HEK293T (cell line): ENCODE measurements at regions of chr19 and their contacts with region 1.

Region 1: DNA sequence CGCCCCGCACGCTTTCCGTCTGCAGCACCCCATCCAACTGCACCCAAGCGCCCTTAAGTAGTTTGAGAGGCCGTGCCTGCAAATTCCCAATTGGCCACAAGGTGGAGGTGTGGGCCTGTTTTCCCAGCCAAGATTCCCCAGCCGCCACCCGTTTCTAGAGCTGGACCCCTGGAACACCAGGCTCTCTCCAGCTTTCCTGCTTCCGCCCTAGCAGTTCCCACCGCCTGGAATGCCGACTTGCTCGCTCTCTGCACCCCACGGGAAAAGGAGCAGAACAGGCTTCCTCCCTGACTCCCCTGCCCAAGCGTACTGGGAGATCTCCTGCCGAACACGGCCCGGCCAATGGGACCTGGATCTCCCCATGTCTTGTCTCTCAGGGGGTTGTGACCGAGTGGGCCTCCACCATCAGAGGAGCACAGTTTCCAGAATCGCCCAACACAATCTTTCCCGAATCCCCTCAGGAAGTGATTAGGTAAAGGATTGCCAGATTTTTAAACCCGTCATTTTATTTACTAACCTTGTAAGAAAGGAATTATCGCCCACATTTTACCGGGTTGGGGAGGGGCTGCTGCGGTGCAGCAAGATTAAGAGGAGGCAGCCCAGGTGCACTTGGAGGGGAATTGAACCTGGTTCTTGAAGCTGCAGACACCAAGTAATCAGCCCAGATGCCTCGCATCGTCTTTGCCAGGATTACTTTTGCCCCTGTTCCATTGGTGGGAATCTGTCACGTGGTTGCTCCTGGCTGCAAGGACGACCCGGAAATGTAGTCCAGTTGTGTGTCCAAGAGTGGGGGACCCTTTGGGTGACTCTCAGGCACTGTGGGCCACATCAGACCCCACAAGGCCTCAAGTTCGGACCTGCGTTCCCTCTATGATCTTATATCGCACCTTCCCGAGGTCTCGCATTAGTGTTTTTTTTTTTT is 3.5 kb upstream of the NAPSA start:
- DNase-seq: peak; percentile 88

Region 2: GRCh38 chr19:50341091-50341564 is 27.8 kb before region 1 on chr19:
- CTCF ChIA-PET with region 1: no interaction called
- POLR2A ChIA-PET with region 1: no interaction called
- DNase-seq: no peak

Region 3: GRCh38 chr19:50383852-50384684 is 15.2 kb after region 1 on chr19 and contains the start of gene POLD1:
- CTCF ChIA-PET with region 1: interaction called, 3 read pairs
- POLR2A ChIA-PET with region 1: interaction called, 11 read pairs
- DNase-seq: peak; percentile 99

Region 4: DNA sequence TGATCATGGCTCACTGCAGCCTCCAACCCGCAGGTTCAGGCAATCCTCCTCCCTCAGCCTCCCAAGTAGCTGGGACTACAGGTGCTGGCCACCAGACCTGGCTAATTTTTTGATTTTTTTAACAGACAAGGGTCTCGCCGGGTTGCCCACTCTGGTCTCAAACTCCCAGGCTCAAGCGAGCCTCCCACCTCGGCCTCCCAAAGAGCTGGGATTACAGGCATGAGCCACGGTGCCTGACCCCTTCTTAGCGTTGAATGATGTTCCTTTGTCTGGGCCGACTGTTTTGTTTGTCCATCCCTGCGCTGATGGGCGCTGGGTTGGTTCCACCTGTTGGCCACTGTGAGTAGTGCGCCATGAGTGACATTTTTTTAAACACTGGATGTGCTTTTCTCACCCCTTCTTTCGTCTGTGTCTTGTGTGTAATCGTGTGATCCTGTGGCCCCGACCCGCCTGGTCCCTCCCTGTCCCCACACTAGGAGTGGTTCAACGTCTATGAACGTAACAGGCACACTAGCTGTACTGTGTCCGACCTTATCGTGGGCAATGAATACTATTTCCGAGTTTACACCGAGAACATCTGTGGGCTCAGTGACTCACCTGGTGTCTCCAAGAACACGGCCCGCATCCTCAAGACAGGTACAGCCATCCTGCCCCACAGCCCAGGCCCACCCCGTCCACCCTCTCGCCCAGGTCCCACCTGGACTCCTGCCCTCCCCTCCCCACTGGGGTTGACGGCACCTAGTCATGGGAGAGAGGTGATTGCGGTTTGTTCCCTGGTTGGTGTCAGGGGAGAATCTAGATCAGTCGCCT is 92.4 kb after region 1 on chr19:
- CTCF ChIA-PET with region 1: interaction called, 8 read pairs
- POLR2A ChIA-PET with region 1: interaction called, 10 read pairs
- DNase-seq: peak; percentile 85

Region 5: GRCh38 chr19:50478901-50479736 is 110.2 kb after region 1 on chr19:
- CTCF ChIA-PET with region 1: interaction called, 14 read pairs
- POLR2A ChIA-PET with region 1: no interaction called
- DNase-seq: peak; percentile 75